MCF 10A (cell line): ENCODE measurements at regions of chr14 and their contacts with region 1.

Region 1: GRCh38 chr14:60349663-60350365 is 100.8 kb downstream of the PPM1A start:
- DNase-seq: peak; percentile 65
- H3K4me3 Mint-ChIP-seq: no peak overlapping the region
- H3K27ac Mint-ChIP-seq: no peak overlapping the region
- H3K4me1 Mint-ChIP-seq: no peaks in the 10 kb centered on the region
- H3K27me3 Mint-ChIP-seq: no peaks in the 10 kb centered on the region
- CTCF ChIP-seq: peak; percentile 49

Region 2: DNA sequence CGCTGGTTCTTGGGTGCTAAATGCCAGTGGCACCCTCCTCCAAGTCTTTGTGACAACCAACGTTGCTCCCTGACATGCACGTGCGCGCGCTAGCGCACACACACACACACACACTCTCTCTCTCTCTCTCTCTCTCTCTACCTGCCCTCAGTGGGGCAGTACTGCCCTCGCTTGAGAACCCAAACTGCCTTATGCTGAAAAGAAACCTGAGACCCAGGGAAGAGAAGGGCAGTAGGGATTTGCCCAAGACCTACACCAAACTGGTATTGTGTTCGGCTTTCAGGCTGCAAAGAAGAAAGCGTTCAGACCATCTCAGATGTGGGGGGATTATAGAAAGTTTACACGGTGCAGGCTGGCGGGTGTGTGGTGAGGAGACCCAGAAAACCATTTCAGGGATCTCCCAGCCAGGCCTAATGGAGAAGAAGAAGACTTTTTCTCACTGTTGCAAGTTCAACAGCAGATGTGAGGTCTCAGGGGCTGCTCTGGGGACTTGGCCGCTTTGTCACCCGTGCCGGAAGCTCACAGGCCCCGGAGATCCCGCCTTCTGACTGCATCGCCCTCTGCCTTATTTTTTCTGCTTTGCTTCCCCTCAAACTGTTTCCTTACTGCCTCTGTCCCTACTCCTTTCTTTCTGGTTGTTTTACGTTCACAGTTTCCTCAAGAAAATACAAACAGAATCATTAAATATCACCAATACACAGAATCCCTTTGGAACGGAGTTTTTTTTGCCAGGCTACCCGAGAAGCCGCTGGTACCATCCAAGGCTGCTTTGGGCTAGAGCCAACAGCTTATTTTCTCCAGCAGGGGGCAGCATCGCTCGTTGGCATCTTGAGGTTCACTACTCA is 18.4 kb before region 1 on chr14:
- CTCF ChIA-PET with region 1: interaction called, 12 read pairs
- POLR2A ChIA-PET with region 1: no interaction called
- intact Hi-C with region 1: no loop called
- DNase-seq: peak; percentile 71
- H3K4me3 Mint-ChIP-seq: peak overlapping the region; percentile 66
- H3K27ac Mint-ChIP-seq: no peak overlapping the region
- H3K4me1 Mint-ChIP-seq: peaks cover 17% of the 10 kb centered on the region
- H3K27me3 Mint-ChIP-seq: peaks cover 35% of the 10 kb centered on the region
- CTCF ChIP-seq: peak; percentile 58

Region 3: DNA sequence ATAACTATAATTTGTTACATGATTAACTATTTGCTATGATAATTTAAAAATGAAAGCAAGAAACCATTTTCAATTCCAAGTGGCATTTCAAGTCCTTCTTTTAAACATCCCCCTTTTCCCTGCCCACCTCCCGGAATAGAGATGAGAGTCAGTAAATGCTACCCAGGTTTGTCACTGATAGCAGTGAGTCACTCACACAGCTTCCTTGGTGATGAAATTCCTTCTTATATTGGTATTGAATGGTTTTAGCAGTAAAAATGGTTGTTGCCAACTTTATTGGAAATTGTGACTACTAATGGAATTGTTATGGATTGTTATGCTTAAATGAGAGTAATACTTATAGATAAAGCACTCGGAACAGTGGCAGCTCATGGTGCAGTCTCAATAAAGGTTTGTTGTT is 10.2 kb before region 1 on chr14:
- CTCF ChIA-PET with region 1: interaction called, 16 read pairs
- POLR2A ChIA-PET with region 1: interaction called, 4 read pairs
- intact Hi-C with region 1: no loop called
- DNase-seq: no peak
- H3K4me3 Mint-ChIP-seq: no peak overlapping the region
- H3K27ac Mint-ChIP-seq: no peak overlapping the region
- H3K4me1 Mint-ChIP-seq: no peaks in the 10 kb centered on the region
- H3K27me3 Mint-ChIP-seq: peaks cover 27% of the 10 kb centered on the region
- CTCF ChIP-seq: no peak

Region 4: DNA sequence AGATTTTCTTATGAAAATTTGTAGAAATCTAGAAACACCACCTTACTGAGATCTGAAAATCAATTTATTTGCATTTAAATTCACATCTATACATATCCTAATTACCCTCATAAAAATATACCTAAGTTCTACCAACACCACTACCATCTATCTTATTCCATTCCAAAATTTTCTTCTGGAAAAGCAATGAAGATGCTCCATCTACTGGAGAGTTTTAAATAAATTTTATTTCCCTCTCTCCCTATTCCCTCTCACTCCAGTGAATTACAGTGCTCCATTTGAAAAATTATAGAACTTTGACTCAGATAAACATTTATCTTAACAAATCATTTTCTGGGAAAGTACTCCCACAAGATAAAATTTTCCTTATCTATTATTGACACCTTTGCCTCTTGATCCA is 138.4 kb after region 1 on chr14:
- CTCF ChIA-PET with region 1: interaction called, 8 read pairs
- POLR2A ChIA-PET with region 1: no interaction called
- intact Hi-C with region 1: loop called (anchors 1 kb)
- DNase-seq: no peak
- H3K4me3 Mint-ChIP-seq: no peak overlapping the region
- H3K27ac Mint-ChIP-seq: no peak overlapping the region
- H3K4me1 Mint-ChIP-seq: no peaks in the 10 kb centered on the region
- H3K27me3 Mint-ChIP-seq: peaks cover 11% of the 10 kb centered on the region
- CTCF ChIP-seq: peak; percentile 20

Region 5: DNA sequence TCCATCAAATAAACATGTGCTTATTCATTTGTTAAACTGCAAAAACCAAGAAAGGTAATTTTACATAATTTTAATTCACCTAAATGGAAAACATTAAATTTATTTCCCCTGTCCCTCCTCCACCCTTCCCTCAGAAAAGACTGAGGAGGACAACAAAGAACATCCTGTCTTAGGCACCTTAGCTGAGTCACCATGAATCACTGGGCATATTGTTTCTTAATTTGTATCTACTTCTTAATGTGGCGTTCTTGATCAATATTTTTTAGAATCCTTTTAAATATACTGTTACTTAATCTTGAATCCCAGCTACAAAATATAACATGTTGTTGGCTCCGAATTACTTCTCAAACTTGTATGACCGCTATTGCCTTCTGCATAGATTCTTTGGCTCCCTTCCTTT is 182.6 kb after region 1 on chr14:
- CTCF ChIA-PET with region 1: interaction called, 10 read pairs
- POLR2A ChIA-PET with region 1: no interaction called
- intact Hi-C with region 1: no loop called
- DNase-seq: peak; percentile 60
- H3K4me3 Mint-ChIP-seq: no peak overlapping the region
- H3K27ac Mint-ChIP-seq: no peak overlapping the region
- H3K4me1 Mint-ChIP-seq: peaks cover 13% of the 10 kb centered on the region
- H3K27me3 Mint-ChIP-seq: no peaks in the 10 kb centered on the region
- CTCF ChIP-seq: no peak

Region 6: GRCh38 chr14:60561845-60562746 is 212.3 kb after region 1 on chr14:
- CTCF ChIA-PET with region 1: interaction called, 139 read pairs
- POLR2A ChIA-PET with region 1: interaction called, 3 read pairs
- intact Hi-C with region 1: loop called (anchors 1 kb)
- DNase-seq: peak; percentile 71
- H3K4me3 Mint-ChIP-seq: no peak overlapping the region
- H3K27ac Mint-ChIP-seq: no peak overlapping the region
- H3K4me1 Mint-ChIP-seq: no peaks in the 10 kb centered on the region
- H3K27me3 Mint-ChIP-seq: no peaks in the 10 kb centered on the region
- CTCF ChIP-seq: peak; percentile 61